ENCODE measurements at regions of chr20 and their contacts with region 1.

Region 1: GRCh38 chr20:51595058-51595532 is 52.6 kb upstream of the NFATC2 start:
- DNase-seq: peak; percentile 67
- H3K4me3 Mint-ChIP-seq: peak overlapping the region; percentile 54
- H3K27ac Mint-ChIP-seq: peak overlapping the region; percentile 82
- H3K4me1 Mint-ChIP-seq: peaks cover 46% of the 10 kb centered on the region
- H3K27me3 Mint-ChIP-seq: peaks cover 3% of the 10 kb centered on the region

Region 2: DNA sequence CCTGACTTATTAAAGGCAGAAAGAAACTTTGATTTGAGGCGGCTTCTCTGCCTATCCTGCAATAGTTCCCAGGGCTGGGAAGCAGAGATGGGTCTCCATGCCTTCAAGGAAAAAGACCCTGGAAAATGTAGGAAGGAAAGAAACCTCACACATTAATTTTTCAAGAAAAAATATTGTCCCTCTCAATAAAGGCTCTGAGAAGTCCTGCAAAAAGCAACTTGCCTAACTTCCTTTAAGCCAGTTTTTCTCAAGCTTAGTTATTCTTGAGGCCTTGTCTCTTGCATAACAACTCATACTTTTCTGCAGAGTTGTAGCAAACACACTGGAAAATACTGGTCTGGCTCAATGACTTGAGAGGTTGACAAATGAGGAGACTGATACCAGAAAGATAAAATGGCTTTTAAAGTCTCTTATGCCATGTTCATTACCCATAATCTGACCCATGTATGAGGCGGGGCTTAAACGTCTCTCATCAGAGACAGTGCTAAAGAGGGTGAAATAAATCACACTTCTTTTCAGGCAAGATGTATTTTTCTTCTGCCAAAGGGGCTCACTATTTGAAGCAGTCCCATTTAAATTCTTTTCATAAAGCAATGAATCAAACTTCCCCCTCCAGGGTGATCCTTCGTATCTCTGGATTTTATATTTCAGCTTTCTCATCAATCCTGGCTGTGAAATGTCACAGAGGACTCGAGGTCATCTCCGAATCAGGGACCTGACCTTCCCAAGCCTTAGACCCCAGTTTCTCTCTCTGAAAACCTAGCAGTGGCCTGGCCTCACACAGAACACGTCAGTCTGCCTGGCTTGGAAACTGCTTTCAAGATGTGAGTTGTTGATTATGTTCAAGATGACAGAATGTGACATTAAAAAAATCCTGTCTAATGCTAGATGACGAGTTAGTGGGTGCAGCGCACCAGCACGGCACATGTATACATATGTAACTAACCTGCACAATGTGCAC is 489.9 kb before region 1 on chr20:
- intact Hi-C with region 1: no loop called
- DNase-seq: no peak
- H3K4me3 Mint-ChIP-seq: no peak overlapping the region
- H3K27ac Mint-ChIP-seq: no peak overlapping the region
- H3K4me1 Mint-ChIP-seq: no peaks in the 10 kb centered on the region
- H3K27me3 Mint-ChIP-seq: peaks cover 13% of the 10 kb centered on the region

Region 3: GRCh38 chr20:51220293-51220706 is 374.8 kb before region 1 on chr20:
- intact Hi-C with region 1: loop called (anchors 10 kb)
- DNase-seq: peak; percentile 33
- H3K4me3 Mint-ChIP-seq: no peak overlapping the region
- H3K27ac Mint-ChIP-seq: no peak overlapping the region
- H3K4me1 Mint-ChIP-seq: peaks cover 14% of the 10 kb centered on the region
- H3K27me3 Mint-ChIP-seq: peaks cover 24% of the 10 kb centered on the region

Region 4: GRCh38 chr20:51372176-51372803 is 222.8 kb before region 1 on chr20:
- intact Hi-C with region 1: loop called (anchors 1 kb)
- DNase-seq: peak; percentile 22
- H3K4me3 Mint-ChIP-seq: no peak overlapping the region
- H3K27ac Mint-ChIP-seq: no peak overlapping the region
- H3K4me1 Mint-ChIP-seq: peaks cover 17% of the 10 kb centered on the region
- H3K27me3 Mint-ChIP-seq: peaks cover 5% of the 10 kb centered on the region

Region 5: GRCh38 chr20:51500311-51500710 is 94.8 kb before region 1 on chr20:
- intact Hi-C with region 1: loop called (anchors 1 kb)
- DNase-seq: peak; percentile 48
- H3K4me3 Mint-ChIP-seq: no peak overlapping the region
- H3K27ac Mint-ChIP-seq: peak overlapping the region; percentile 81
- H3K4me1 Mint-ChIP-seq: peaks cover 86% of the 10 kb centered on the region
- H3K27me3 Mint-ChIP-seq: no peaks in the 10 kb centered on the region

Region 6: GRCh38 chr20:51631011-51631950 is 36.2 kb after region 1 on chr20:
- intact Hi-C with region 1: loop called (anchors 1 kb)
- DNase-seq: peak; percentile 7
- H3K4me3 Mint-ChIP-seq: peak overlapping the region; percentile 5
- H3K27ac Mint-ChIP-seq: peak overlapping the region; percentile 70
- H3K4me1 Mint-ChIP-seq: peaks cover 43% of the 10 kb centered on the region
- H3K27me3 Mint-ChIP-seq: peaks cover 7% of the 10 kb centered on the region